ENCODE measurements at regions of chr18 and their contacts with region 1.

Region 1: DNA sequence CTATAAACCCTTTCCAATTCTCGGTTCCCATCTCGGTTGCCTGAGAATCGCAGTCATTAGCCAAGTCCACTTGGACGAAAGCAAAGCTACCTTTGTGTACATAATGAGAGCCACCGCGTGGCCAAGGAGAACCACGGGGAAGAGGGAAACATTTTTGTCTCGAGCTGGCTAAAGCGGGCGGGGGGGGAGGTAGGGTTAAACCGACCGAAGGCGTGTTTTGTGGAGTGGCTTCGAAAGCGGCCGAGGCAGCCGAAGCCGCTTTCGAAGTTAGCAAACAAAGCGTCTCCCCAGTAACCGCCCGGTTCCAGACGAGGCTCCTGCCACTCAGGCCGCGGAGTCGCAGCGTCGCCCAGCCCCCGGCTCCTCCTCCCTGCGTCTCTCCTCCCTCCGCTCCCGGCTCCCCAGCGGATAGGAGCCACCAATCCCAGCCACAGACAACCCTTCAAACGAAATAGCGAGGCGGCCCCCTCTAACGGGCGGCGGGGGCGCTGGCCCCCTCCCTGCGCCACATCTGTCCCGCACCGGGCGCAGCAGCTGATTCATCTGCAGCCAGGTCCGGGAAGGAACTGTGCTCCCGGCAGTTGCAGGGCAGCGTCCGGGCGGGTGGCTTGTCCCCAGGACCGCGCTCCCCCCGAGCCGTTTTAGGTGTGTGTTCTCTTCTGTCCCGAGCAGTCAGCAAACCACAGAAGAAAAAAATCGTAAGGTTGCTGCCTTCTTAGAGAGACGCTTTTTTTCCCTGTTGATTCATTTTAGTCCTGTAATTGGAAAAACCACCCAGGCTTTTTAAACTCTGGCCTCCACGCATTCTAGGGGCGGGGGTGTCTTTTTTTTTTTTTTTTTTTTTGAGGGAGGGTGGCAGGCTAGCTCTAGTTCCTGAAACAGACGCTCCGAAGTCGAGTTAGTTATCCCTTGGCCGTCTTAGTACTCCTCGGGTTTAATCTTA is 1.8 kb upstream of the TGIF1 start:
- DNase-seq: peak; percentile 99
- H3K4me3 ChIP-seq: peak overlapping the region; percentile 56 to 75 (median 67)
- H3K27ac ChIP-seq: peak overlapping the region; percentile 99
- H3K4me1 ChIP-seq: peaks cover 17% of the 10 kb centered on the region
- H3K27me3 ChIP-seq: no peaks in the 10 kb centered on the region
- CTCF ChIP-seq: peak in 1 of 2 donors; percentile 41

Region 2: GRCh38 chr18:3261371-3262246 is 186.6 kb before region 1 on chr18 and contains the start of gene MYL12B:
- CTCF ChIA-PET with region 1: no interaction called
- dilution Hi-C with region 1: loop called (anchors 5 kb)
- in situ Hi-C with region 1: no loop called
- intact Hi-C with region 1: loop called (anchors 1 kb)
- DNase-seq: peak; percentile 82
- H3K4me3 ChIP-seq: peak within 1 kb of the TSS; percentile 77 to 93 (median 85)
- H3K27ac ChIP-seq: peak within 1 kb of the TSS; percentile 97
- H3K4me1 ChIP-seq: peaks cover 27% of the 10 kb centered on the region
- H3K27me3 ChIP-seq: no peaks in the 10 kb centered on the region
- CTCF ChIP-seq: peak in 1 of 2 donors; percentile 8
- total RNA-seq, gene MYL12B: 464 to 468 TPM

Region 3: DNA sequence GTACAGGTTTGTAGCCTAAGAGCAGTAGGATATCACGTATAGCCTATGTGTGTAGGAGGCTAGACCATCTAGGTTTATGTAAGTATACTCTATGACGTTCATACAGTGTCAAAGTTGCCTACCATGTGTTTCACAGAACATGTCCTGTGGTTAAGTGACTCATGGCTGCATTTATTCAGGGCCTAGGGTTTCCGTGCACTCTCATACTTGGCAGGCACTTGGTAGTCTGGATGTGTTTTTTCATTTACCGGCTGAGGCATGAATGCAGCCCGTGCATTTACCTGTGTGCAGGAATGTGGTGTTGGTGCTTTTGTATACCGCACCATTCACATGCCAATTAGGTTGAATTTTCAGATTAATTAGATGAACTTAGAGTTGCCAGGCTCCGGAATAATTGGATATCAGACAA is 142.8 kb before region 1 on chr18:
- CTCF ChIA-PET with region 1: no interaction called
- dilution Hi-C with region 1: loop called (anchors 10 kb)
- in situ Hi-C with region 1: loop called in 1 of 2 experiments (anchors 5 kb)
- intact Hi-C with region 1: loop called (anchors 2 kb)
- DNase-seq: peak; percentile 98
- H3K4me3 ChIP-seq: peak overlapping the region in 2 of 3 experiments; percentile 4 to 23
- H3K27ac ChIP-seq: peak overlapping the region; percentile 96
- H3K4me1 ChIP-seq: peaks cover 23% of the 10 kb centered on the region
- H3K27me3 ChIP-seq: no peaks in the 10 kb centered on the region
- CTCF ChIP-seq: no peak

Region 4: DNA sequence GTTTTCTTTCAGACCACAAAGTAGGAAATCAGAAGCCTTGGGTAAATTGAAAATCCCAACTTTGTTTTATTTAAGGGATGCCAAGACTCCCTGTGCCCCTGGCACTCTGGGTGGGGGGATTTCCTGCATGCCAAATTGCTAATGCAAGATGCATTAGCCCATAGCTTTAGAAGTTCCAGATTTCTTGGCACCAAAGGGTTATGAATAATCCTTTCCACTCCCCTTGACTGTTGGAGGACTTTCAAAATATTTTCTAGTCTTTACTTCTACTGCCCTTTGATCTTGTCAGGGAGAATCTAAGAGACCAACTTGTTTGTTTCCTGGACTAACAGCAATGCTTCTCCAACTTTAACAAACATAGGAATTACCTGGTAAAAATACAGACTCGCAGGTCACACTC is 80.0 kb before region 1 on chr18:
- CTCF ChIA-PET with region 1: no interaction called
- dilution Hi-C with region 1: no loop called
- in situ Hi-C with region 1: no loop called
- intact Hi-C with region 1: loop called (anchors 2 kb)
- DNase-seq: peak; percentile 86
- H3K4me3 ChIP-seq: peak overlapping the region in 2 of 3 experiments; percentile 8 to 18
- H3K27ac ChIP-seq: peak overlapping the region; percentile 97
- H3K4me1 ChIP-seq: peaks cover 25% of the 10 kb centered on the region
- H3K27me3 ChIP-seq: no peaks in the 10 kb centered on the region
- CTCF ChIP-seq: no peak

Region 5: GRCh38 chr18:3593904-3594661 is 145.9 kb after region 1 on chr18:
- CTCF ChIA-PET with region 1: interaction called, 3 read pairs
- dilution Hi-C with region 1: no loop called
- in situ Hi-C with region 1: loop called in 1 of 2 experiments (anchors 5 kb)
- intact Hi-C with region 1: loop called (anchors 1 kb)
- DNase-seq: peak; percentile 87
- H3K4me3 ChIP-seq: peak overlapping the region; percentile 45 to 56 (median 53)
- H3K27ac ChIP-seq: peak overlapping the region; percentile 99
- H3K4me1 ChIP-seq: peaks cover 49% of the 10 kb centered on the region
- H3K27me3 ChIP-seq: no peaks in the 10 kb centered on the region
- CTCF ChIP-seq: peak; percentile 92 to 95

Region 6: DNA sequence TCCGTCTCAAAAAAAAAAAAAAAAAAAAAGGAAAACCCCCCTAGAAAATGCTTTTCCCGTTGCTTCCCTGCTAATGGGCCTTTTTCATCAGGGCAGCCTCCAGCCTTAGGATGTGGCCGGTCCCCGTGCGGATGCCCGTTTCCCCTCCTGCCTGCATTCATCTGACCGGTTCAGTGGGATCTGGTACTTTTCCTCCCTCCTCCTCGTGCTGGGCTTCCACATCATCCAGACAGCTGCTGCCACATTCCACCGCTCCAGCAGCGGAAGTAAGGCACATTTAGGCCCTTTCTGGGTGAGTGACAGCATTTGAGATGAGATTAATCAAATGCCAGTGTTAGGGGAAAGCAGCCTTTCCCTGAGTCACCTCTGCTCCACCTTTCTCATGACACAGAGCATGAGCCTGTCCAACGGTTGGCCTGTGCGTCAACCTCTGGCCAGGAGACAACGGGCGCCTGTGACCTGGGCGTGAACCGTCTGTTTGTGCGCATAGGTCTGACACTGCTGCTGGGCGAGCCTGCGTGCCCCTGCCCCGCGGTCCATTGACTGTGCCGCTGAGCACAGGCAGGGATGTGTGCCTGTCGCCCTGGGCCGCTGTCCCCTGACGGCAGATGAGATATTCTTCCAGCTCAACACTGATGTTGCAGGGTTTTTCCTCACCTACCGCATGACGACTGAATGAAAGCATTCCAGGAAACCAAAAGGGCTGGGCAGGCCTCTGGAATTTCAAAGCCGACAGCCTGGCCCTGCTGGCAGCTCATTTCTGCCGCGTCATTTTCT is 175.8 kb after region 1 on chr18:
- CTCF ChIA-PET with region 1: no interaction called
- dilution Hi-C with region 1: no loop called
- in situ Hi-C with region 1: no loop called
- intact Hi-C with region 1: loop called (anchors 1 kb)
- DNase-seq: peak; percentile 98
- H3K4me3 ChIP-seq: peak overlapping the region; percentile 18 to 43 (median 39)
- H3K27ac ChIP-seq: peak overlapping the region; percentile 100
- H3K4me1 ChIP-seq: peaks cover 40% of the 10 kb centered on the region
- H3K27me3 ChIP-seq: no peaks in the 10 kb centered on the region
- CTCF ChIP-seq: no peak

Region 7: GRCh38 chr18:3869848-3870247 is 421.7 kb after region 1 on chr18:
- CTCF ChIA-PET with region 1: no interaction called
- dilution Hi-C with region 1: no loop called
- in situ Hi-C with region 1: no loop called
- intact Hi-C with region 1: loop called (anchors 5 kb)
- DNase-seq: peak; percentile 37
- H3K4me3 ChIP-seq: no peak overlapping the region
- H3K27ac ChIP-seq: no peak overlapping the region
- H3K4me1 ChIP-seq: no peaks in the 10 kb centered on the region
- H3K27me3 ChIP-seq: peaks cover 1% of the 10 kb centered on the region
- CTCF ChIP-seq: peak; percentile 46 to 59

Measured in mammary epithelial cell (primary cell).